HepG2 (cell line): ENCODE measurements at regions of chr19 and their contacts with region 1.

Region 1: GRCh38 chr19:40465557-40466150 is at the start of gene BLVRB:
- DNase-seq: peak; percentile 96
- ATAC-seq: peak; percentile 82
- H3K4me3 ChIP-seq: peak within 1 kb of the TSS; percentile 66 to 87 (median 75)
- H3K27ac ChIP-seq: peak within 1 kb of the TSS; percentile 66
- H3K4me1 ChIP-seq: peaks cover 52% of the 10 kb centered on the region
- H3K27me3 ChIP-seq: peaks cover 1 to 17% of the 10 kb centered on the region in 2 experiments; a peak in 3 of 5 replicates
- CTCF ChIP-seq: peak; percentile 19; the same call in 1 of the 2 replicates
- EP300 ChIP-seq: no peak
- POLR2A ChIP-seq: peak; percentile 44 to 92; a peak in 2 of 4 replicates
- RAD21 ChIP-seq: no peak
- total RNA-seq, gene BLVRB: 25.9 and 32.7 TPM in 2 replicates

Region 2: DNA sequence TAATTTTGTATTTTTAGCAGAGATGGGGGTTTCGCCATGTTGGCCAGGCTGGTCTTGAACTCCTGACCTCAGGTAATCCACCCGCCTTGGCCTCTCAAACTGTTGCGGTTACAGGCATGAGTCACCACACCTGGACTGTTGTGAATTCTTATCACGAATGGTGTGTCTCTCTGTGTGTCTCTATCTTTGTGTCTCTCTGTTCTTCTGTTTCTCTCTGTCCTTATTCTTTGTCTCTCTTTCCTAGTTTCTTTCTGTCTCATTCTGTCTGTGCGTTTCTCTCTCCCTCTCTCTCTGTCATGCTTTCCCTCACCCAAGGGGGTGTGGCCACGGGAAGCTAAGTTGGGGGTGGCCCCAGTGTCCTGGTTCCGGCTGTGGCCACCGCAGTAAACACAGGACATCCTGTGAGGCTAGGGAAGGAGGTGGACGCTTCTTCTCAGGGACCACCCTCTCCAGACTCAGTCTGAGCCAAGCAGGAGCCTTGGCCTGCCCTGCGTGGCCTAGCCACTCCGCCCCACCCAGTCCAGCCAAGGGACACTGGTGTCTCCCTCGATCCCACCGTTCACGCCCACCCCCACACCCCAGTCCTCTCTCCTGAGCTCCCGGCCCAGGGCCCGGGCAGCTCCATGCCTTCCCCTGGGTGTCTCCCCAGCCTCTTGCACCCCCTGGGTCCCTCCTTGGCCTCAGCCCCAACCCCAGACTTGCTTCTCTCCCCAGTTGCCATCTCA is 48.6 kb before region 1 on chr19:
- CTCF ChIA-PET with region 1: interaction called, 3 read pairs
- POLR2A ChIA-PET with region 1: interaction called, 20 read pairs
- in situ Hi-C with region 1: no loop called
- intact Hi-C with region 1: loop called (anchors 1 kb)
- DNase-seq: peak; percentile 51
- ATAC-seq: peak; percentile 18
- H3K4me3 ChIP-seq: peak overlapping the region in 2 of 3 experiments; percentile 50 to 65; a peak in 5 of 6 replicates
- H3K27ac ChIP-seq: no peak overlapping the region
- H3K4me1 ChIP-seq: peaks cover 48% of the 10 kb centered on the region
- H3K27me3 ChIP-seq: 0 out of 5 replicates have a peak, but pooled peaks cover 0 to 10% of the 10 kb centered on the region in 2 experiments
- CTCF ChIP-seq: no peak
- EP300 ChIP-seq: no peak
- POLR2A ChIP-seq: peak; percentile 31 to 68; a peak in 2 of 4 replicates
- RAD21 ChIP-seq: no peak

Region 3: GRCh38 chr19:40425450-40426287 is 40.0 kb before region 1 on chr19 and contains the start of gene SERTAD1:
- CTCF ChIA-PET with region 1: interaction called, 3 read pairs
- POLR2A ChIA-PET with region 1: interaction called, 47 read pairs
- in situ Hi-C with region 1: no loop called
- intact Hi-C with region 1: no loop called
- DNase-seq: peak; percentile 98
- ATAC-seq: peak; percentile 88
- H3K4me3 ChIP-seq: peak within 1 kb of the TSS; percentile 63 to 94 (median 86)
- H3K27ac ChIP-seq: peak within 1 kb of the TSS; percentile 96
- H3K4me1 ChIP-seq: peaks cover 48% of the 10 kb centered on the region
- H3K27me3 ChIP-seq: no peaks in the 10 kb centered on the region; a peak in 1 of 5 replicates
- CTCF ChIP-seq: peak; percentile 78
- EP300 ChIP-seq: no peak
- POLR2A ChIP-seq: peak; percentile 97 to 99
- RAD21 ChIP-seq: peak; percentile 43; the same call in 1 of the 2 replicates
- total RNA-seq, gene SERTAD1: 4.3 and 4.7 TPM in 2 replicates

Region 4: DNA sequence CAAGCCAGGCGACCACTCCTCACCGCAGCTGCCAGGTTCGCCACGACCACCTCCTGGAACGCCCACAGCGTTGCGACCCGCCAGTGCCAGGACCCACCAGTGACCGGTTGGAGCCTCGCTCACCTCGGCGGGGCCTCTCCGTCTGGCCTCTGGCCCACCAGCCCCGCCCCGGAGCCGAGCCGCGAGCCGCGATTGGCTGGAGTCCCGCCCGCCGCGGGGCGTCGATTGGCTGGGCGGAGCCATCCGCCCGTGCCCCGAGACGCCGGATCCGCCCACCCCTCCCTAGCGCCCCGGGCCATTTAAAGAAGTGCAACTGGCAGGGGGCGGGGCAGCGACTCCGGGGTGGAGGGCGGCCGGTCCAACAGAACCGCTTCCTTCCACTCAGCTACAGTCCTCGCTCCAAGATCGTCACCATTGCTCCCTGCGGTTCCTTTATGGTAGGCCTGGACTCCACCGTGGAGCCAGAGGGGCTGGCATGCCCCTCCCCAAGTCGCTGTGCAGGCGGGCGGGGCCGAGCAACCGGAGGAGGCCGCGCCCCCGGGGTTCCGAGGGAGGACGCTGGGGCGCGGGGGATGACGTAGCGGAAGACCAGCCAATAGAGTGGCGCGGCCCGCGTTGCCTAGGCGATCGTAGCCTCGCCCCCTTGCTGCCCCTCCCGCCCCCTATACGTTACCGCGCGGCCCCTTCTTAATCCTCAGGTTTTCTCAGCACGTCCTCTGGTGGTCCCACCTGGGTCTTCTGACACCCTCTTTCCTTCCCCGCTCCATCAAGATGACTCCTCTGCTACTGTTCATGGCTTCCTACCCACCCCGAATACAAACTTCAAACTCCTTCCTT is 21.2 kb before region 1 on chr19 and contains the start of gene SERTAD3:
- CTCF ChIA-PET with region 1: no interaction called
- POLR2A ChIA-PET with region 1: interaction called, 46 read pairs
- in situ Hi-C with region 1: no loop called
- intact Hi-C with region 1: loop called (anchors 2 kb)
- DNase-seq: peak; percentile 87
- ATAC-seq: peak; percentile 85
- H3K4me3 ChIP-seq: peak within 1 kb of the TSS; percentile 88 to 99 (median 92)
- H3K27ac ChIP-seq: peak within 1 kb of the TSS; percentile 98
- H3K4me1 ChIP-seq: peaks cover 12% of the 10 kb centered on the region
- H3K27me3 ChIP-seq: peaks cover 0 to 5% of the 10 kb centered on the region in 2 experiments; a peak in 1 of 5 replicates
- CTCF ChIP-seq: peak; percentile 78
- EP300 ChIP-seq: no peak
- POLR2A ChIP-seq: peak; percentile 87 to 97
- RAD21 ChIP-seq: peak; percentile 31
- total RNA-seq, gene SERTAD3: 16.9 and 17.8 TPM in 2 replicates

Region 5: GRCh38 chr19:40453151-40453735 is 12.4 kb before region 1 on chr19:
- CTCF ChIA-PET with region 1: no interaction called
- POLR2A ChIA-PET with region 1: interaction called, 10 read pairs
- in situ Hi-C with region 1: no loop called
- intact Hi-C with region 1: no loop called
- DNase-seq: no peak
- ATAC-seq: no peak
- H3K4me3 ChIP-seq: no peak overlapping the region
- H3K27ac ChIP-seq: peak overlapping the region; percentile 58
- H3K4me1 ChIP-seq: peaks cover 19% of the 10 kb centered on the region
- H3K27me3 ChIP-seq: no peaks in the 10 kb centered on the region
- CTCF ChIP-seq: no peak
- EP300 ChIP-seq: no peak
- POLR2A ChIP-seq: no peak
- RAD21 ChIP-seq: no peak

Region 6: GRCh38 chr19:40529093-40529954 is 63.7 kb after region 1 on chr19:
- CTCF ChIA-PET with region 1: no interaction called
- POLR2A ChIA-PET with region 1: interaction called, 3 read pairs
- in situ Hi-C with region 1: no loop called
- intact Hi-C with region 1: loop called (anchors 10 kb)
- DNase-seq: peak; percentile 56
- ATAC-seq: peak; percentile 57
- H3K4me3 ChIP-seq: peak overlapping the region; percentile 35 to 65 (median 51)
- H3K27ac ChIP-seq: no peak overlapping the region
- H3K4me1 ChIP-seq: peaks cover 29% of the 10 kb centered on the region
- H3K27me3 ChIP-seq: no peaks in the 10 kb centered on the region; a peak in 1 of 5 replicates
- CTCF ChIP-seq: peak; percentile 95
- EP300 ChIP-seq: no peak
- POLR2A ChIP-seq: no peak
- RAD21 ChIP-seq: peak; percentile 56; the same call in 1 of the 2 replicates

Region 7: DNA sequence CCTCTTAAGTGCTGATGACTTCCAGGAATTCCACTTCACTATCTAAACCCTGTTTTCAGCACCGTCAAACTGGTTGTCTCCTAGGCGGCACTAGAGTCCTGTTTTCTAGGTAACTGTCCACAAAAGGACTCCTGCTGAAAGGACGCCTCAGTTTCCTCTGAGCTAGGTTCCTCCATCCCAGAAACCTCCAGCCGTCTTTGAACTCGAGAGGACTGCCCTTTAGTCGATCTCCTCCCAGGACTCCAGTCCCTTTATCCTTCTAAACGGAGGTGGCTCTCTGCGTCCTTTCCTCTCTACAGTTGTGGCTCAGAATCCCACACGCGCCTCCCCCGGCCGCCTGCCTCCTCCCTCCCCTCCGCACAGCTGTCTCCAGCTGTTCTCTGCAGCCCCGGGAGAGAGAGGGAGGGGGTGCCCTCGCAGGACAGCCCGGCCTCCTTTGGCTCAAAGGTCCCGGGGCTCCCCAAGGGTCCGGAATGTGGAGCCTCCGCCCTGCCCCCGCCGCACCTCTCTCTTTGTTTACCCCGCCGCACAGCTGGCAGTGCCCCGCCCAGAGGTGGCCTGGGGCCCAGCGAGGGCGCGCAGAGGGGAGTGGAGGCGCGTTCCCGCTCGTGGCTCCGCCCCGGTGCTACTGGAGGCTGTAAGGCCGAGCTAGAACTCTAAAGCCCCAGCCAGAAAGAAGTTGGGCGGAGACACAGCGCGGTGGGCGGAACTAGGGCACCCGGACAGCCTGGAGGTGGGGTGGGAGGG is 137.9 kb after region 1 on chr19:
- CTCF ChIA-PET with region 1: no interaction called
- POLR2A ChIA-PET with region 1: interaction called, 11 read pairs
- in situ Hi-C with region 1: no loop called
- intact Hi-C with region 1: no loop called
- DNase-seq: peak; percentile 96
- ATAC-seq: peak; percentile 79
- H3K4me3 ChIP-seq: peak overlapping the region; percentile 9 to 63 (median 39); a peak in 4 of 6 replicates
- H3K27ac ChIP-seq: peak overlapping the region; percentile 39
- H3K4me1 ChIP-seq: peaks cover 73% of the 10 kb centered on the region
- H3K27me3 ChIP-seq: peaks cover 6 to 62% of the 10 kb centered on the region in 2 experiments; a peak in 3 of 5 replicates
- CTCF ChIP-seq: peak; percentile 39; the same call in 1 of the 2 replicates
- EP300 ChIP-seq: peak; percentile 52 to 74; a peak in 2 of 4 replicates
- POLR2A ChIP-seq: no peak
- RAD21 ChIP-seq: peak; percentile 45

Region 8: GRCh38 chr19:40721936-40722661 is 256.4 kb after region 1 on chr19:
- CTCF ChIA-PET with region 1: no interaction called
- POLR2A ChIA-PET with region 1: no interaction called
- in situ Hi-C with region 1: no loop called
- intact Hi-C with region 1: no loop called
- DNase-seq: no peak
- ATAC-seq: no peak
- H3K4me3 ChIP-seq: no peak overlapping the region
- H3K27ac ChIP-seq: no peak overlapping the region
- H3K4me1 ChIP-seq: peaks cover 34% of the 10 kb centered on the region
- H3K27me3 ChIP-seq: no peaks in the 10 kb centered on the region; a peak in 1 of 5 replicates
- CTCF ChIP-seq: no peak
- EP300 ChIP-seq: no peak
- POLR2A ChIP-seq: no peak
- RAD21 ChIP-seq: no peak